Caco-2 (cell line): ENCODE measurements at regions of chr4 and their contacts with region 1.

Region 1: DNA sequence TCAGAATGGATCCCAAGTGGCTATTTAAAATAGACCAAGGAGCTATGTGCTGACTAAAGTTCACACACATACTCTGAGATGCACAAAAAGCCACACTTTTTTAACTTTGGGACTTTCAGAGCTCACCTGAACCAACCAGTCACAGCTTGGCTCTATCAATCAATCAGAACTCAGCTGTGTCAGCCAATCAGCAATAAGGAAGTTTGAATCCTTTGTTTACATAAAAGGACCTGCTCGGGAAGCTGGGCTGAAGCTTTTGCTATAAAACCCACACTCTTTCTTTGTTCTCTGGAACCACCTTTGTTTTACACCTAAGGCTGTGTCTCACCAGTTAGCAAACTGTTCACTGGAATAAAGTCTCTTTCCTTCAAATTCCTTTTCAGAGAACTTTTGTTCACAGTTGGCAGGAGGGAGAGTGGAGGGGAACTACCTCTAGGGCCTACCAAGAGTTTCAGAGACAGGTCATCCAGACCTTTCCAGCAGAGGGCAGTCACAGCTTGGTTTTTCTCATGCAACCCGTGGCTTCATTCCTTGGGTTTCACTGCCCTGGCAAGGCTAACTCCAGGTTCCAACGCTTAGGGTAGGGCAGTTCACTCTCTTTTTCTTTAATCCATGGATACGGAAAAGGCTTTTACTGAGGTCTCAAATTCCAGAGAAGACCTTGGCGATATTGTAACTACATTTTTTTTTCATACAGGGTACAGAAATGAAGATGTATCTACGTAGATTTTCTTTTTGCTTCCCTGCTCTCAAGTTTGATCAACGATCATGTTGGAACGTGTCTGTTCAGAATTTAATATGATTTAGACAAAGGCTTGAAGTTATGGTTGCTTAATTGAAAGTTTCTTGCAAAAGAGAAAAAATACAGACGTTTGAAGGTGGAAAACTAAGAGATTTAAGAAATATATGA is 80.7 kb downstream of the GPRIN3 start:
- DNase-seq: peak; percentile 77 to 78
- H3K4me3 ChIP-seq: no peak overlapping the region
- H3K4me3 Mint-ChIP-seq: no peak overlapping the region
- H3K27ac Mint-ChIP-seq: no peak overlapping the region
- H3K4me1 ChIP-seq: peaks cover 7% of the 10 kb centered on the region; the same call in 1 of the 2 replicates
- H3K4me1 Mint-ChIP-seq: no peaks in the 10 kb centered on the region
- H3K27me3 ChIP-seq: no peaks in the 10 kb centered on the region
- H3K27me3 Mint-ChIP-seq: no peaks in the 10 kb centered on the region
- CTCF ChIP-seq: peak; percentile 43 to 70

Region 2: GRCh38 chr4:89123451-89123851 is 103.5 kb before region 1 on chr4:
- CTCF ChIA-PET with region 1: no interaction called
- POLR2A ChIA-PET with region 1: no interaction called
- intact Hi-C with region 1: loop called (anchors 5 kb)
- DNase-seq: peak in 1 of 2 experiments; percentile 60
- H3K4me3 ChIP-seq: no peak overlapping the region
- H3K4me3 Mint-ChIP-seq: peak overlapping the region; percentile 86
- H3K27ac Mint-ChIP-seq: peak overlapping the region; percentile 98
- H3K4me1 ChIP-seq: peaks cover 68% of the 10 kb centered on the region
- H3K4me1 Mint-ChIP-seq: peaks cover 64% of the 10 kb centered on the region
- H3K27me3 ChIP-seq: no peaks in the 10 kb centered on the region
- H3K27me3 Mint-ChIP-seq: no peaks in the 10 kb centered on the region
- CTCF ChIP-seq: no peak

Region 3: GRCh38 chr4:89158884-89159503 is 67.9 kb before region 1 on chr4:
- CTCF ChIA-PET with region 1: no interaction called
- POLR2A ChIA-PET with region 1: no interaction called
- intact Hi-C with region 1: loop called (anchors 1 kb)
- DNase-seq: peak in 1 of 2 experiments; percentile 41
- H3K4me3 ChIP-seq: no peak overlapping the region
- H3K4me3 Mint-ChIP-seq: no peak overlapping the region
- H3K27ac Mint-ChIP-seq: no peak overlapping the region
- H3K4me1 ChIP-seq: no peaks in the 10 kb centered on the region
- H3K4me1 Mint-ChIP-seq: peaks cover 6% of the 10 kb centered on the region
- H3K27me3 ChIP-seq: no peaks in the 10 kb centered on the region
- H3K27me3 Mint-ChIP-seq: no peaks in the 10 kb centered on the region
- CTCF ChIP-seq: peak; percentile 64 to 69

Region 4: DNA sequence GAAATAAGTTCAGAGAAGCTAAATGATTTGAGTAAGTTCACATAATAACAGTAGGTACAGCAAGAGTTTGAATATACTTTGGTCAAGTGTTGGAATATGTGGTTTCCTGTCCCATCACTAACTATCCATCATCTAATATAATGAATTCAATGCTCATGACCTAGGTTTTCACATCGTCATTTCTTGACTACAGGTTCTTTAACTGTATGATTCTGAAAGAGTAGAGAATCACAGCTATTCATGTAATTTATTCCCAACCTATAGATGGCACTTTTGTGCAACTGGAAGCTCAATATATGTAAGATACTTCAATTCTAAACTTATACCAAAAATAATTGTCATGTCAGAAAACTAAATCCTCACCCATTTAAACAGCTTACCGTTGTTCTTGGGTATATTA is 62.5 kb before region 1 on chr4:
- CTCF ChIA-PET with region 1: interaction called, 3 read pairs
- POLR2A ChIA-PET with region 1: no interaction called
- intact Hi-C with region 1: loop called (anchors 1 kb)
- DNase-seq: no peak
- H3K4me3 ChIP-seq: no peak overlapping the region
- H3K4me3 Mint-ChIP-seq: no peak overlapping the region
- H3K27ac Mint-ChIP-seq: no peak overlapping the region
- H3K4me1 ChIP-seq: no peaks in the 10 kb centered on the region
- H3K4me1 Mint-ChIP-seq: no peaks in the 10 kb centered on the region
- H3K27me3 ChIP-seq: no peaks in the 10 kb centered on the region
- H3K27me3 Mint-ChIP-seq: no peaks in the 10 kb centered on the region
- CTCF ChIP-seq: no peak

Region 5: GRCh38 chr4:89382439-89382838 is 155.5 kb after region 1 on chr4:
- CTCF ChIA-PET with region 1: no interaction called
- POLR2A ChIA-PET with region 1: no interaction called
- intact Hi-C with region 1: no loop called
- DNase-seq: no peak
- H3K4me3 ChIP-seq: no peak overlapping the region
- H3K4me3 Mint-ChIP-seq: no peak overlapping the region
- H3K27ac Mint-ChIP-seq: no peak overlapping the region
- H3K4me1 ChIP-seq: no peaks in the 10 kb centered on the region
- H3K4me1 Mint-ChIP-seq: no peaks in the 10 kb centered on the region
- H3K27me3 ChIP-seq: no peaks in the 10 kb centered on the region
- H3K27me3 Mint-ChIP-seq: peaks cover 18% of the 10 kb centered on the region
- CTCF ChIP-seq: no peak